ENCODE measurements at regions of chr18 and their contacts with region 1.

Region 1: DNA sequence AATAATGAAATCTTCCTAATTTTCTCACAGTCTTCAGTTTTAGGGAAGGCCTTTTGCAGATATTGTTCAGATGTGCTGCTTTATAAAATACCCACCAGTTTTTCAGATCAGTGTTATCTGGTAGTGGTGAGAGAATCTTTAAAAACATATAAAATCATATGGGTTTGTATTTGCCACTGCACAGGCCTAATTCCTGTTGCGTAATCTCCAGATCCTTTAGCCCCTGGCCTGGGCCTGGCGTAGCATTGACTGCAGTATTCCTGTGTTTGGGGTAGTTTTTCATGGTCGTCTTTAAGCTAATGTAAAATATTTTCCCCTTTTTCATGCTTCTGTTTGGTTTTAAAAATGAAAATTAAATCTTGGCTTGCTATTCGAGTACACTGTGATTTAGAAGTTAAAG is 43.2 kb downstream of the TSHZ1 start:
- DNase-seq: no peak
- H3K4me3 ChIP-seq: no peak overlapping the region
- H3K27ac ChIP-seq: no peak overlapping the region
- H3K4me1 ChIP-seq: peaks cover 0 to 42% (median 26%) of the 10 kb centered on the region in 4 donors
- H3K27me3 ChIP-seq: no peaks in the 10 kb centered on the region
- CTCF ChIP-seq: no peak

Region 2: DNA sequence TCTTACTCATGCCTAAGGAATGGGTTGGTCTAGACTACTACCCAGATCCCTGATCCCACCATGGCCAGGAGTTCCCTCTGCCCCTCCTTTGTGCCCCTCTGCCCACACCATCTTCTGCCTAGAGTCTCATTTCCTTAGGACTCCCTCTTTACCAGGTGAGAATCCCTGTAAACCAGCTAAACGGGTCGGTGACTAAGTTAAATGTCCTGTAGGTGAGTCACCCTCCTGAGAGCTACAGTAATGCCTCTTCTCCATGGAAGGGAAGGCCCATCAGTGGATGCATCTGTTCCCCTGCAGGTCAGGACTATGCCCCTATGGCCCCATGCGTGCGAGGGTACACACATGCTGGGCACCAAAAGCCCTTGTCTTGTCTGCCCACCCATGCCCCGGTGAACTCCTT is 70.3 kb before region 1 on chr18:
- intact Hi-C with region 1: no loop called
- DNase-seq: no peak
- H3K4me3 ChIP-seq: no peak overlapping the region
- H3K27ac ChIP-seq: no peak overlapping the region
- H3K4me1 ChIP-seq: no peaks in the 10 kb centered on the region
- H3K27me3 ChIP-seq: no peaks in the 10 kb centered on the region
- CTCF ChIP-seq: no peak

Region 3: DNA sequence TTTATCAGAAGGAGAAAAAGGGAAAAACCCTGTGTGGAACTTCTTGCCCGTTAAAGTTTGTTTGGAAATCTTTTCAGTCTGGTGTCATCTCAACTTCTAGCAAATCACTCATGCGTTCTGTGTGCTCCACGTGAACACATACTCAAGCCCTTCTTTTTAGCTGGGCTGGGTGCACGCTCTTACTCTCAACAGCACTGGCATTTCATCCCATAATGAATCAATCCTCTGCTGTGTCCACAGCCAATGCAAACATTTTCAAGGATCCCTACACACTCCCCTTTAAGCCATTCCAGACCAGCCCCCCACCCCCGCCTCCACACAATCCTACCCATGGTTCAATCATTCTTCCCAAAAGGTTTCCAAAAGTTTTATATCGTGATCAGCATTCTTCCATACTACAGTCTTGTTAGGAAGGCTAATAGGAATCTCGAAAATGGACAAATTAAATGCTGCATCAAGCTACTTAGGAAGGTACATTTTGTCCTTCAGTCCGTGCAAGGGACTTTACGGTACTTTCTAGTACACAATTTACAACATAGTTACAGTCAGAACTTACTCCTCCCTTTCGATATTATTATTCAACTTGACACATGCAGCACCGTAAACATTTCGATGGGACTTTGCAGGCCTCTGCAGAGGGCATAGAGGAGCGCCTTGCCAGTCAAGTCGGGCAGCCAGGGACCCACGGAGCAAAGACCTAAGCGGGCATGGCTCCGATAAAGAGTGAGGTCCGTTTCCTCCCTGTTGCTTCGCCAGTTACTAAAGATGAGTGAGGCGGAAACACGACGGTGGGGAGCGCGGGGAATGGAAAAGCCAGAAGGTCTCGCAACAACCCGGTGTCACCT is 46.3 kb before region 1 on chr18:
- intact Hi-C with region 1: loop called (anchors 2 kb)
- DNase-seq: no peak
- H3K4me3 ChIP-seq: peak overlapping the region; percentile 83 to 96
- H3K27ac ChIP-seq: peak overlapping the region; percentile 97 to 98
- H3K4me1 ChIP-seq: peaks cover 0 to 55% (median 38%) of the 10 kb centered on the region in 4 donors
- H3K27me3 ChIP-seq: no peaks in the 10 kb centered on the region
- CTCF ChIP-seq: no peak